Right ventricle myocardium superior (tissue), 1 donor: ENCODE measurements at regions of chrX and their contacts with region 1.

Region 1: DNA sequence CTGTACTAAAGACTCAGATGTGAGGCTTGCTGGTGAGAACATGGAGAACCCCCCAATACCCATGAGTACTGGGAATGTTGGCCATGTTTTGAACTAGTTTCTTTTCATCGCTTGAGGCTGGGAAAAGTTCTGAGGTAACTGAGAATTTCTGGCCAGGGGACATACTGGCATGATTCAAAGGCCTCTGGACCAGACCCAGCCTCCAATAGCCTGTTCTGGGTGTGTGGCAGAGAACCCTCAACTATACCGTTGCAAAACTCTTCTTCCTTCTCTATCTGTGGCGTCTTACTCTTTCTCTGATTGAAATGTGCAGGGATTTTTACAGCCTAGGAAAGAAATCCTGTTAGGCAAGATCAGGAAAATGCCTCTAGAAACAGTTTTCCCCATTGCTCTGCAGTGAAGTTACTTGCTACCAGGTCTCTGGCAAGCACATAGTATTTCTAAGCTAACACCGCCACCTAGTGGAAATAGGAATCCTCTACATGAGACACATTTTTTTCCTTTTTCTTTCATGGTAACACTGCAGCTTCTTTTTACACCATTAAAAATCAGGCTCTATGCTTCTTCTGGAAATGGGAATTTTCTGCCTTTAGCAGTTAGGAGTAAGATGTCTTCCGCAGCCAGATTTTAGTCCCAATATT is 170.7 kb upstream of the ZCCHC13 start:
- DNase-seq: no peak
- ATAC-seq: peak; percentile 65

Region 2: DNA sequence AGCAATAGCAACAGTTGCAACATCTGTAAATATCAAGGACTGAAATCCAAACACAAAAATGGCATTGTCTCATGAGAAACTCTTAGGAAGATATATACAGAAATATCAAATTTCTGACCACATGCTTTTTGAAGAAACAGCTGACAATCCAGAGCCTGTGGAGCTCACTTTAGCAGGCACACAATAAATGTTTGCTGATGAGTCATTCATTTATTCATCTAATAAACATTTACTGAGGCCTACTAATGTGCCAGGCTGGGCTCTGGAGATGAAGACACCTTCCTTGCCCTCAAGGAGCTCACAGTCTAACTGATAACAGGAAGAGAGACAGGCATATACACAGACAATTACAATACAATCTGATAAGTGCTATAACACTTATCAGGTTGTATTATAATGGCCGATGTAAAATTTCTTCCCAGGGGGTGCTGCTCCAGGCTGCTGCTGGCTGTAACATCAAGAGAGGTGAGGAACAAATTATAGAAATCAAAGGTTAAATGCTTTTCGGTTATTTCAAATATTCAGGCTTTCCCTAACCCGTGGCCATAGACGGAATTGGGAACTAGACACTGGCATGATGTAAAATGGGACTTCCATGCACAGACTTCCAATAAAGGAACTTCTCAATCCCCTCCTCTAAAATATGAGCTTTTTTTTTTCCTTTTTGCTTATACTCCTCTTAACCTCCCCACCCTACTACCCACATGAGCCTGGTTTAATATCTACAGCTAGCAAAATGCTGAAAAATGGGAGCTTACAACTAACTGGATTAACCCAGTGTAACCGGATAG is 153.9 kb after region 1 on chrX:
- intact Hi-C with region 1: no loop called
- DNase-seq: no peak
- ATAC-seq: no peak

Region 3: DNA sequence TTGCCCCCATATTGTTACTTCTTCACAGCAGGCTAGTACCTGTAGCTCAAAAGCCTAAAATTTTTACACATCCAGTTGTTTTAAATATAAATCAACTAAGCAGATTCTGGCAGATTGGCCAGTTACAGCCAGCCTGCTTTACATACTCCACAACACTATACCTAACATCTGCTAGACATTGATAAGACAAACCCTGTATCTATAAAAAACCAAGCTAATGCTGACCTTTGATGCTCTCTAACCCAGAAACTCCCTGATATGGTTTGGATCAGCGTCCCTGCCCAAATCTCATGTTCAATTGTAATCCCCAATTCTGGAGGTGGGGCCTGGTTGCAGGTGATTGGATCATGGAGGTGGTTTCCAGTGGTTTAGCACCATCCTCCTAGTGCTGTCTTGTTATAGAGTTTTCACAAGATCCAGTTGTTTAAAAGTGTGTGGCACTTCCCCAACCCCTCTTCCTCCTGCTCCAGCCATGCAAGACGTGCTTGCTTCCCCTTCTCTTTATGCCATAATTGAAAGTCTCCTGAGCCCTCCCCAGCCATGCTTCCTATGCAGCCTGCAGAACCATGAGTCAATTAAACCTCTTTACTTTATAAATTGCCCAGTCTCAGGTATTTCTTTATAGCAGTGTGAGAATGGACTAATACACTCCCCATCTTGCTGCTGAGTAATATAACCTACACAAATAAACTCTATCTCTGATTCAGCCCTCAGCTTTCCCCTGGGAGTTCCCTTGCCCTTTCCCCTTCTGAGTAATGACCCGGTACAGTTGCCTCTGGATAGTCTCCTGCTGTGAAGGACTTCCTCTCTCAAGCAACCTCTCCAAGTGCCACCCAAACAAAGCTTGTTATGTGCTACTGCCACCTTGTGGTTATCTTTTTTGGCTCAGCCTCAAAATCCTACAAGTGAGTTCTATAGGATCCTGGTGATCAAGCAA is 210.3 kb after region 1 on chrX:
- intact Hi-C with region 1: loop called (anchors 10 kb)
- DNase-seq: no peak
- ATAC-seq: peak; percentile 82